AG04449 (cell line): ENCODE measurements at regions of chr3 and their contacts with region 1.

Region 1: GRCh38 chr3:67593761-67594244 is 60.6 kb downstream of the SUCLG2 start:
- DNase-seq: no peak
- H3K4me3 ChIP-seq: no peak overlapping the region
- CTCF ChIP-seq: no peak

Region 2: DNA sequence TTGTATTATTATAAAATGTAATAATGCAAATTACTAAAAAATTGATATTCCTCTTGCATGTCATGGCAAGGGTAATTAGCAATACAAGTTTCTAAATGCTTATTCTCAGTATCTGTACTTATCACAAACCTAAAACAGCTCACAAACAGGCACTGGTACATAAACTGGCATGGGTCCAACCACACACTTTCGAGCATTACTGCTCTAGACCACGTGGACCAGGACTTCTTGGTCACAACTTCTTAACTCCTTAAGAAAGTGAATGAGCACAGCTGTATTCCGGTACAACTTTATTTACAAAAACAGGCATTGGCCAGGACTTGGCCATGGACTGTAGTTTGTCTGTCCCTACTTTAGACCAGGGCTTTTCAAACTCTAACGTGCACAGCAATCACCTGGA is 112.7 kb before region 1 on chr3:
- CTCF ChIA-PET with region 1: no interaction called
- POLR2A ChIA-PET with region 1: no interaction called
- DNase-seq: no peak
- H3K4me3 ChIP-seq: no peak overlapping the region
- CTCF ChIP-seq: no peak

Region 3: GRCh38 chr3:67605377-67605776 is 11.6 kb after region 1 on chr3:
- CTCF ChIA-PET with region 1: interaction called, 10 read pairs
- POLR2A ChIA-PET with region 1: no interaction called
- DNase-seq: peak; percentile 46
- H3K4me3 ChIP-seq: no peak overlapping the region
- CTCF ChIP-seq: peak; percentile 62